ENCODE measurements at regions of chr11 and their contacts with region 1.

Region 1: GRCh38 chr11:72642884-72643511 is 31.2 kb downstream of the PDE2A start:
- DNase-seq: peak; percentile 25
- H3K4me3 ChIP-seq: peak overlapping the region; percentile 32 to 46
- H3K27ac ChIP-seq: peak overlapping the region in 1 of 2 donors; percentile 8
- H3K4me1 ChIP-seq: no peaks in the 10 kb centered on the region
- H3K27me3 ChIP-seq: peaks cover 2% of the 10 kb centered on the region
- CTCF ChIP-seq: peak; percentile 93 to 95 (median 94)
- POLR2A ChIP-seq: no peak

Region 2: GRCh38 chr11:72585762-72586311 is 57.2 kb before region 1 on chr11:
- intact Hi-C with region 1: loop called (anchors 2 kb)
- DNase-seq: peak; percentile 68
- H3K4me3 ChIP-seq: no peak overlapping the region
- H3K27ac ChIP-seq: no peak overlapping the region
- H3K4me1 ChIP-seq: no peaks in the 10 kb centered on the region
- H3K27me3 ChIP-seq: peaks cover 7% of the 10 kb centered on the region
- CTCF ChIP-seq: peak; percentile 82 to 91 (median 88)
- POLR2A ChIP-seq: no peak

Region 3: GRCh38 chr11:72598906-72599305 is 44.1 kb before region 1 on chr11:
- intact Hi-C with region 1: loop called (anchors 2 kb)
- DNase-seq: peak; percentile 16
- H3K4me3 ChIP-seq: no peak overlapping the region
- H3K27ac ChIP-seq: no peak overlapping the region
- H3K4me1 ChIP-seq: no peaks in the 10 kb centered on the region
- H3K27me3 ChIP-seq: no peaks in the 10 kb centered on the region
- CTCF ChIP-seq: peak in 3 of 4 experiments; percentile 47 to 48 (median 47)
- POLR2A ChIP-seq: no peak

Measured in prostate gland (tissue), 2 donors.